OCI-LY7 (cell line): ENCODE measurements at regions of chr17 and their contacts with region 1.

Region 1: DNA sequence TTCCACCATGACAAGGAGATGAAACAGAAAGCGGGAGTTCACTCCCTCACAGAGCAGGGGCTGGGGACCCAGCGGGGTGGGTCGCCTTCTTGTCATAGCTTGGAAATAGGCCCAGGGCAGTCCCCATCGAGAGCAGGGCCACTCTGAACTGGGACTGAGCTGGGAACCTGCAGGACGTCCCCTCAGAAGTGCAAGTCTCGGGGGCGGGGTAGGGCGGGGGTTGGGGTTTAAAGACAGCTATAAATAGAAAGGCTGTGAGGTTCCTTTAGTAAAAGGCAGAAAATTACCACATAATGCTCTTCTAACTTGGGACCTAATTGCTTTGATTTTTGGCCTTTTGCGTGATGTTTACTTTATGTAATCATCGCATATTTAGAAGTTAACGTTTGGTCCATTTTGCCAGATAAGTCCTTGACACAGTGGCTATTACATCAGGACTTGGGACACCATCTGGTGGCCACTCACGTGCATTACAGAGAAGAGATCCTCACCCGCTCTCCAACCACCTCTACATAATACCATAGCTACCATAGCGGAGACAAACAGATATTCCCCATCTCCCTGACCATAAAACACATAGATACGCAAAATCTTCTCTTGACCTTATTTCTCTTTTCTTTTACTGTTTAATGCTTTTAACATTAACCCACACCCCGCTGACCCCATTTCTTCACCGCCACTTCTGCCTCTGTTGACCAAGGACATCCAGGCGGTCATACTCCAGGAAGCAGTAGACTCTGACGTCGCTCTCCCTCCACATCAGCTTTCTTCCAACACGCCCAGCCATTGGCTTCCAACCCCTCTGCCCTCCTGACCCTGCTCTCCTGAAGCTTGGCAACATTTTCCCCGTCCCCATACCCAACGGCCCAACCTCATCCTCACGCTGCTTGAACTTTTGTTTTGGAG is 27.5 kb upstream of the PIK3R6 start:
- DNase-seq: peak; percentile 68
- H3K4me3 ChIP-seq: no peak overlapping the region
- H3K27ac ChIP-seq: no peak overlapping the region
- H3K4me1 ChIP-seq: peaks cover 23% of the 10 kb centered on the region
- CTCF ChIP-seq: peak; percentile 84

Region 2: DNA sequence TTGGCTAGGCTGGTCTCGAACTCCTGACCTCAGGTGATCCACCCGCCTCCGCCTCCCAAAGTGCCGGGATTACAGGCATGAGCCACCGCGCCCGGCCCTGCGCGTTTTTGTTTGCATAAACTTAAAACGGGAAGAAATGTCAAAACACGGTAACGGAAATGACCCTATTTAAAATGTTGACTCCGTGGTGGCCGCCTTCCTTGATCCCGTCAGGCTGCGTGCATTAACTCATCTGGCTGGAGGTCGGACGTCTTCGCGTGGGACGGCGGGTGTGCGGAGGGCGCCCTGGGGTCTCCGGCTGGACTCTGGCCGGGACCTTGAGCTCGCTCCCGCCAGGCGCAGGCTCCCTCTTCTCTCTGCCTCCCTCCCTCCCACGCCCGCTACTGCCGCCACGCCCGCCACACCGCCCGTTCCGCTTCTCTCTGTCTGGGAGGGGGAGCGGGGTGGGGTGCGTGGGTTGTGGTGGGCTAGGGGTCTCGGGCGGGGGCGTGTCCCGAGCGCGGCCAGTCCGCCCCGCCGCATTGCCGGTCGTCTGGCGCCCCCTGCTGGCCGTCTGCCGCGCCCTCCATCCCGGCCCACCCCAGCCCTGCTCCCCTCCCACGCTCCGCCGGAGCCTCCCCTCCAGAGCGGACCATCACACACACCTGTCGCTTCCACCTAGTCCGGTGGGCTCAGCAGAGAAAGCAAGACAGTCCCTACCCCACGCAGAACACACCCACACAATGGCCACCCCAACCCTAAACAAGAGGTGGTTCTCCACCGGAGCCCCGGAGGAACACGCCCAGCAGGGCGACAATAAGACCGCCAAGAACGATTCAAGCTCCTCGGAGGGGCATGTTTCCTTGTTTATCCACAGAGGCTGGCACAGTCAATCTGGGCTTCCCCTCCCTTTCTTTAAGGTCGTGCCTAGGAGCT is 149.1 kb before region 1 on chr17:
- CTCF ChIA-PET with region 1: no interaction called
- POLR2A ChIA-PET with region 1: no interaction called
- intact Hi-C with region 1: loop called (anchors 2 kb)
- DNase-seq: peak; percentile 57
- H3K4me3 ChIP-seq: peak overlapping the region; percentile 73
- H3K27ac ChIP-seq: no peak overlapping the region
- H3K4me1 ChIP-seq: no peaks in the 10 kb centered on the region
- CTCF ChIP-seq: peak; percentile 84

Region 3: DNA sequence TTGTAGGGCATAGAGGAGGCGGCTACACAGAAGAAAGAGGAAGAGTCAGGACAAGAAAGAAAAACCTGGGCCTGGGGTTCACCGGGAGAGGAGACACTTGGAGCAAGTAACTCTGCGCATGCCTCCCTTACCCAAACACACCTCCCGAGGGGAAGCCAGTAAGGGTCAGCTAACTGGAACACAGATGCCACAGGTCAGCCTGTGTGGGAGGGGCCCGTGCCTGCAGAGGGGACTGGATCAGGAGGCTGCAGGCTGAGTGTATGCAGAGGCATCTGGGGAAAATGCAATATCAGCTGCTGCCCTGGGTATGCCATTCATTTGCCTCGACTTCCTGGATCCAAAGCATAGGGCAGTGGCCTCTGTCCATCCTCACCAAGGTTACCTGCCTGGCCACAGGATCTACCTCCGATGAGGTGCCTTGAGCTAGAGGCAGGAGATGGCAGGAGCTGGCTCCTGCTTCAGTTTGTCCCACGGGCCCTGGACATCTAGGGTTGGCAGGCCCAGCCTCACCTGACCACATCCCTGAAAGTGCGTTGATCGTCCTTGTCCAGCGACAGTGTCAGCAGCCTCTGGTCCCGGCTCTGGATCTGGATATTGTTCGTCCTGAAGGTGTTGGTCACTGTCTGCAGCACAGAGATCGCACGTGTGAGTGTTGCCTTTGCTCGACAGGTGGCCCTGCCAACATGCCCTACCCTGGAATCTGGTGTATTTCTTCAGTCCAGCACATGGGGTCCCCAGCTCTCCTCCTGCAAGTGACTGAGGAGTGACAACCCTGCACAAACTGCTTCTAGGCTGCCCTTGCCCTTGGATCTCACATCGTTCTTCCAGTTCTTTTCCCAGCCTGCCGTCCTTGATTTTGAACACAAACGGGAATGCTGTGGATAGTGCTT is 91.2 kb before region 1 on chr17:
- CTCF ChIA-PET with region 1: no interaction called
- POLR2A ChIA-PET with region 1: no interaction called
- intact Hi-C with region 1: loop called (anchors 1 kb)
- DNase-seq: peak; percentile 37
- H3K4me3 ChIP-seq: no peak overlapping the region
- H3K27ac ChIP-seq: no peak overlapping the region
- H3K4me1 ChIP-seq: peaks cover 15% of the 10 kb centered on the region
- CTCF ChIP-seq: peak; percentile 37; the same call in 1 of the 2 replicates

Region 4: GRCh38 chr17:8997994-8998628 is 103.2 kb after region 1 on chr17:
- CTCF ChIA-PET with region 1: interaction called, 4 read pairs
- POLR2A ChIA-PET with region 1: interaction called, 3 read pairs
- intact Hi-C with region 1: loop called (anchors 5 kb)
- DNase-seq: peak; percentile 73
- H3K4me3 ChIP-seq: no peak overlapping the region
- H3K27ac ChIP-seq: no peak overlapping the region
- H3K4me1 ChIP-seq: peaks cover 4% of the 10 kb centered on the region
- CTCF ChIP-seq: peak; percentile 99